ENCODE measurements at regions of chr11 and their contacts with region 1.

Region 1: GRCh38 chr11:11798586-11799438 is 43.0 kb upstream of the USP47 start:
- DNase-seq: peak; percentile 38
- H3K4me3 ChIP-seq: no peak overlapping the region
- H3K27ac ChIP-seq: no peak overlapping the region
- H3K27me3 ChIP-seq: peaks cover 3% of the 10 kb centered on the region
- CTCF ChIP-seq: peak; percentile 98

Region 2: GRCh38 chr11:11841723-11842420 is 43.1 kb after region 1 on chr11 and contains the start of gene USP47:
- CTCF ChIA-PET with region 1: interaction called, 10 read pairs
- POLR2A ChIA-PET with region 1: no interaction called
- DNase-seq: peak; percentile 45
- H3K4me3 ChIP-seq: peak within 1 kb of the TSS; percentile 76
- H3K27ac ChIP-seq: peak within 1 kb of the TSS; percentile 96
- H3K27me3 ChIP-seq: no peaks in the 10 kb centered on the region
- CTCF ChIP-seq: peak; percentile 69
- polyA plus RNA-seq, gene USP47: 27.7 and 35.0 TPM in 2 replicates

Measured in AG04450 (cell line).